ENCODE measurements at regions of chr1 and their contacts with region 1.

Region 1: DNA sequence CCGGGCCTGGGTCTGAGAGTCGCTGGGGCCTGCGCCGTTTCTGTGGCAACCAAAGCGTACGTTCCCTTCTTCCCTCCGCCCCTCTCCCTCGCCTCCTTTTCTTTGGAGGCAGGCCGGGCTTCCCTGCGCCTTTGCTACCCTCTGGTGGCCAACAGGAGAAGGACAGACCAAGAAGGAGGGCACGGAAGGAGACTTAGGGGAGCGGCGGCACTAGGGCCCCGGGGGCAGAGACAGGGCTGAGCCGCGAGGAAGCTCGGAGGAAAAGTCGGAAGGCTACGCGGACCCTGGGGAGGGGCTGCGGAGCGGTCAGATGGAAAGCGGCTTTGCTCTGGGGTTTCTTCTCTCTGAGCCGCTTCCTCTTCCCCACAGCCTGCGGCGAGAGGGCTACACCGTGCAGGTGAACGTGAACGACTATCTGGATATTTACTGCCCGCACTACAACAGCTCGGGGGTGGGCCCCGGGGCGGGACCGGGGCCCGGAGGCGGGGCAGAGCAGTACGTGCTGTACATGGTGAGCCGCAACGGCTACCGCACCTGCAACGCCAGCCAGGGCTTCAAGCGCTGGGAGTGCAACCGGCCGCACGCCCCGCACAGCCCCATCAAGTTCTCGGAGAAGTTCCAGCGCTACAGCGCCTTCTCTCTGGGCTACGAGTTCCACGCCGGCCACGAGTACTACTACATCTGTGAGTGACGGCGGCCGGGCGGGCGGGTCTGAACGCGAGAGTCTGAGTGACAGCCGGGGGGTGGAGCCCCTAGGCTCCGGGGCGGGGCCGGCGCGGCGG is 6.3 kb downstream of the EFNA3 start:
- DNase-seq: peak; percentile 77 to 96
- H3K4me3 ChIP-seq: peak overlapping the region; percentile 66 to 81
- H3K27ac ChIP-seq: peak overlapping the region; percentile 79 to 83
- H3K4me1 ChIP-seq: peaks cover 24 to 33% of the 10 kb centered on the region in 2 donors
- H3K27me3 ChIP-seq: peaks cover 40% of the 10 kb centered on the region
- CTCF ChIP-seq: peak; percentile 93 to 98 (median 94)

Region 2: DNA sequence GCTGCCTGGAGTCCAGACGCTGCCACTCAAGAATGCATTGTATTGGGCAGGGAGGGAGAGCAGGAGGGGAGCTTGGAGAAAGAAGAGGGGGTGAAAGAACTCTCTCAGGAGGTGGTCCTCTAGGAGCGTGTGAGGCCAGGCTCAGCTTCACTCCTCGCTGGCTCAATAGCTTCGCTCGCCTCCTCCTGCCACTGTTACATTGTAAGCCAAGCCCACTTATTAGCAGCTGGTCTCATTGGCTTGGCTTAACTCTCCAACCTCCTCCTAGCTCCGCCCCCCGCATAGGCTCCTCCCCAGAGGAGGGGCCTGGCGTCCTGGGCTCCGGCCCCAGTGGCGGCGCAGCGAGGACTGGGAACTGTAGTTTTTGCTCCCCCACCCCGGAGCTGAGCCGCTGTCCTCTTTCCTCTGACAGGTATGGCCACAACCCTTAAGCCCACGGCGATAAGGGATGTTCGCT is 214.8 kb before region 1 on chr1 and contains the start of gene KCNN3:
- intact Hi-C with region 1: no loop called
- DNase-seq: peak; percentile 72 to 96
- H3K4me3 ChIP-seq: peak within 1 kb of the TSS; percentile 35 to 64
- H3K27ac ChIP-seq: no peak within 1 kb of the TSS
- H3K4me1 ChIP-seq: peaks cover 0 to 23% of the 10 kb centered on the region in 2 donors
- H3K27me3 ChIP-seq: no peaks in the 10 kb centered on the region
- CTCF ChIP-seq: no peak
- total RNA-seq, gene KCNN3: 24.6 TPM

Region 3: GRCh38 chr1:155017041-155017945 is 67.6 kb before region 1 on chr1:
- intact Hi-C with region 1: loop called (anchors 2 kb)
- DNase-seq: peak; percentile 68 to 96
- H3K4me3 ChIP-seq: peak overlapping the region; percentile 42 to 59
- H3K27ac ChIP-seq: peak overlapping the region; percentile 82 to 89
- H3K4me1 ChIP-seq: peaks cover 7 to 15% of the 10 kb centered on the region in 2 donors
- H3K27me3 ChIP-seq: no peaks in the 10 kb centered on the region
- CTCF ChIP-seq: peak; percentile 99 to 100 (median 99)

Region 4: DNA sequence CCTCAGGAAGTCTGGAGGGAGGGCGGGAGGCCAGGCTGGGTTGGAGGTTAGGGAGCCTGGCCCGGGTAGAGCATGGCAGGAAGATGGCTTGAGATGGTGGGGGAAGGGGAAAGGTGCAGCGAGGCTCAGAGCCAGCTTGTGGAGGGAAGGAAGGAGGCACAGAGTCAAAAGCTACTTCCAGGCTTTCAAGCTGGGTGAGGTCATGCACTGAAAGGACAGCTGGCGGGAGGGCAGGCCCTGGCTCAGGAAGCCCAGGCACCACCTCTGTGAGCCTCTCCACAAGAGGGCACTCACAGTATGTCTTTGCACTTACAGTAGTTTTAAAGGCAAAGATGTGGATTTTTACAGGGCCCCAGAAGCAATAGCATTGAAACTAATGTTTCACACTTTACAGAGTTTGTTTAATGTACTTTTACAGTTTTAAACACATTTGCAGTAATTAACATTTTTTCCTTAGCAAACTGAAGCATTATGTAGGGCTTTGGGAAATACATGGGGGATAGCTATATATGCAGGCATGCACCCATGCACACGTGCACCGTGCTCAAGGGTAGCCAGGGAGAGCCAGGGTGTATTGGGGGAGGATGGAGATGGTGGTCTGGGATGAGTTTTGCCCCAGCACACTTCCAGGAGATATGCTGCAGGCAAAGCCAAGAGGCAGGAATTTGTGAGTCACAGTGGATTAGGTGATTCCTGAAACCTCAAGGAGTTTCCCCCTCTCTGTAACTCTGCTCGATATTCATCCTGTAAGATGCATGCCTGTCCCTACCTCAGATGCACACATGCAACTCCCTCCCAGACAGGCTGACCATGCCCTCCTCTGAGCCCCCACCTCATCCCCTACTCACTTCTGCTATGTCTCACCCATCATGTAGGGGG is 39.9 kb before region 1 on chr1:
- intact Hi-C with region 1: loop called (anchors 1 kb)
- DNase-seq: peak; percentile 51 to 91
- H3K4me3 ChIP-seq: no peak overlapping the region
- H3K27ac ChIP-seq: no peak overlapping the region
- H3K4me1 ChIP-seq: peaks cover 0 to 4% of the 10 kb centered on the region in 2 donors
- H3K27me3 ChIP-seq: no peaks in the 10 kb centered on the region
- CTCF ChIP-seq: peak; percentile 54 to 83 (median 72)

Region 5: DNA sequence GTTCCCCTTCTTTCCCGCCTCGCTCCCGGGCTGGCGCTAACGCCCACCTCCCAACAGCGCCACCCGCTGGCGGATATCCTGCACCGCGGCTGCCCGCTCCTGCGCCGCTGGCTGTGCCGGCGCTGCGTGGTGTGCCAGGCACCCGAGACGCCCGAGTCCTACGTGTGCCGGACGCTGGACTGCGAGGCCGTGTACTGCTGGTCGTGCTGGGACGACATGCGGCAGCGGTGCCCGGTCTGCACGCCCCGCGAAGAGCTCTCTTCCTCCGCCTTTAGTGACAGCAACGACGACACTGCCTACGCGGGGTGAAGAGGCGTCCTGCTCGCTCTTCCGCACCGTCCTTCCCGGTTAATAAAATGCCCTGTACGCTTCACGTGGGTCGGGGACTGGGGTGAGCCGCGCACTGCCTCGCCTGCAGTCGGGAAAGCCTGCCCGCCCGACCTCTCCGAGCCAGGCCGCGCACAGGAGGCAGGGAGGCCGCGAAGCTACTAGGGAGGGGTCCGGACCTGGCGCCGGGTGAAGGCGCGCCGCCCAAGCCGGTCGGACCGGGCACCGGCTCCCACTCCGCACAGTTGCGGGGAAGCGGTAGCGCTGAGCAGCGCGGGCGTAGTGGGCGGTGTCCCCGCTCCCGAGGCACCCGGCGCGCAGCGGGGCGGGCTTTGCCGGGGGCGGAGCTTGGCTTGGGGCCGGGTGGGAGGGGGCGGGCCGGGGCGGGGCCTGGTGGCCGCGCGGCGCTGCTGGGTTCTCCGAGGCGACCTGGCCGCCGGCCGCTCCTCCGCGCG is 34.2 kb before region 1 on chr1 and contains the start of gene ADAM15:
- intact Hi-C with region 1: loop called (anchors 1 kb)
- DNase-seq: peak in 1 of 2 donors; percentile 90
- H3K4me3 ChIP-seq: peak within 1 kb of the TSS; percentile 69 to 80
- H3K27ac ChIP-seq: peak within 1 kb of the TSS; percentile 83 to 86
- H3K4me1 ChIP-seq: peaks cover 0 to 20% of the 10 kb centered on the region in 2 donors
- H3K27me3 ChIP-seq: no peaks in the 10 kb centered on the region
- CTCF ChIP-seq: peak; percentile 87 to 97 (median 88)
- total RNA-seq, gene ADAM15: 610 TPM

Region 6: DNA sequence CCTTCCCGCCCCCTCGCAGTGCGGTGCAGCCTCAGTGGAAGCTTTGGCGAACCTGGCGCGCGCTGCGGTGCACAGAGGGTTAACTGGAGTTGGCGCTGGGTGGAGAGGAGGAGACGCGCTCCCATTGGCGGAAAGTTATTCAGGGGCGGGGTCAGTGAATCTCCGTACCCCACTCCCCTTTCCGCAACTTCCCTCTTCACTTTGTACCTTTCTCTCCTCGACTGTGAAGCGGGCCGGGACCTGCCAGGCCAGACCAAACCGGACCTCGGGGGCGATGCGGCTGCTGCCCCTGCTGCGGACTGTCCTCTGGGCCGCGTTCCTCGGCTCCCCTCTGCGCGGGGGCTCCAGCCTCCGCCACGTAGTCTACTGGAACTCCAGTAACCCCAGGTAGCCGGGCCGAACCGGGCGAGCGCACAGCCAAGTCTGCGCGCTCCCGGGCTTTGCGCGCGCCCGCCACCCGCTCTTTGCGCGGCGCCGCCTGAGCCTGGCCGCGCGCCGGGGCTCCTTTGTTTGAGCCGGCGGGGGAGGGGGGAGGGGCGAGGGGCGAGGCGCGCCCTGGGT is 21.3 kb before region 1 on chr1 and contains the start of gene EFNA4:
- intact Hi-C with region 1: loop called (anchors 1 kb)
- DNase-seq: peak in 1 of 2 donors; percentile 87
- H3K4me3 ChIP-seq: peak within 1 kb of the TSS; percentile 60 to 93
- H3K27ac ChIP-seq: peak within 1 kb of the TSS; percentile 38 to 65
- H3K4me1 ChIP-seq: peaks cover 14 to 18% of the 10 kb centered on the region in 2 donors
- H3K27me3 ChIP-seq: no peaks in the 10 kb centered on the region
- CTCF ChIP-seq: no peak
- total RNA-seq, gene EFNA4: 11.2 TPM